PC-3 (cell line): ENCODE measurements at regions of chr18 and their contacts with region 1.

Region 1: GRCh38 chr18:22846088-22846683 is 86.9 kb upstream of the RBBP8 start:
- DNase-seq: peak; percentile 60
- ATAC-seq: peak; percentile 28; the same call in 1 of the 2 replicates
- H3K4me3 ChIP-seq: no peak overlapping the region
- H3K27ac ChIP-seq: no peak overlapping the region
- H3K4me1 ChIP-seq: peaks cover 25% of the 10 kb centered on the region
- H3K27me3 ChIP-seq: no peaks in the 10 kb centered on the region
- CTCF ChIP-seq: peak; percentile 76

Region 2: DNA sequence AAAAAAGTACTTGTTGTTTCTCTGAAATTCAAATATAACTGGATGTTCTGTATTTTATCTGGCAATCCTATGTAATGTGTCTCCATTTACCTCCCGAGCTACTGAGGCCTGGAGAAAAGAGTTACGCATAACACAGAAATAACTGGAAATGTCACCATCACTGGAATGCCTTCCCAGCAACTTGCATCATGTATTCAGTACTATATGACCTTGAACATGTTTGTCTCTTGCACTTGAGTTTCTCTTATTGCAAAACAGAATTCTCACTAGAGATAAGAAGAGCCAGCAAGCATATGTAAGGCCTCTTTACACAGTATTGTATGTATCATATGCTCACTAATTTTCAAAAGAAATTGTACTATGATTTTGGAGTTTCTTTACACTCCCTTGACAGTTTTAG is 328.8 kb before region 1 on chr18:
- CTCF ChIA-PET with region 1: no interaction called
- POLR2A ChIA-PET with region 1: no interaction called
- intact Hi-C with region 1: no loop called
- DNase-seq: no peak
- ATAC-seq: no peak
- H3K4me3 ChIP-seq: no peak overlapping the region
- H3K27ac ChIP-seq: no peak overlapping the region
- H3K4me1 ChIP-seq: no peaks in the 10 kb centered on the region
- H3K27me3 ChIP-seq: no peaks in the 10 kb centered on the region
- CTCF ChIP-seq: no peak

Region 3: GRCh38 chr18:22723773-22724172 is 122.4 kb before region 1 on chr18:
- CTCF ChIA-PET with region 1: no interaction called
- POLR2A ChIA-PET with region 1: no interaction called
- intact Hi-C with region 1: no loop called
- DNase-seq: no peak
- ATAC-seq: no peak
- H3K4me3 ChIP-seq: no peak overlapping the region
- H3K27ac ChIP-seq: no peak overlapping the region
- H3K4me1 ChIP-seq: no peaks in the 10 kb centered on the region
- H3K27me3 ChIP-seq: no peaks in the 10 kb centered on the region
- CTCF ChIP-seq: no peak

Region 4: GRCh38 chr18:22813648-22814328 is 32.4 kb before region 1 on chr18:
- CTCF ChIA-PET with region 1: interaction called, 4 read pairs
- POLR2A ChIA-PET with region 1: no interaction called
- intact Hi-C with region 1: loop called (anchors 5 kb)
- DNase-seq: peak; percentile 70
- ATAC-seq: peak; percentile 85
- H3K4me3 ChIP-seq: no peak overlapping the region; the same call in 1 of the 2 replicates
- H3K27ac ChIP-seq: no peak overlapping the region
- H3K4me1 ChIP-seq: peaks cover 15% of the 10 kb centered on the region
- H3K27me3 ChIP-seq: no peaks in the 10 kb centered on the region
- CTCF ChIP-seq: peak; percentile 93

Region 5: GRCh38 chr18:22983175-22983574 is 137.0 kb after region 1 on chr18:
- CTCF ChIA-PET with region 1: no interaction called
- POLR2A ChIA-PET with region 1: no interaction called
- intact Hi-C with region 1: loop called (anchors 1 kb)
- DNase-seq: peak; percentile 67
- ATAC-seq: no peak
- H3K4me3 ChIP-seq: no peak overlapping the region
- H3K27ac ChIP-seq: no peak overlapping the region
- H3K4me1 ChIP-seq: peaks cover 7% of the 10 kb centered on the region
- H3K27me3 ChIP-seq: no peaks in the 10 kb centered on the region
- CTCF ChIP-seq: peak; percentile 69

Region 6: GRCh38 chr18:23032030-23032582 is 185.9 kb after region 1 on chr18:
- CTCF ChIA-PET with region 1: no interaction called
- POLR2A ChIA-PET with region 1: no interaction called
- intact Hi-C with region 1: no loop called
- DNase-seq: peak; percentile 52
- ATAC-seq: no peak; the same call in 1 of the 2 replicates
- H3K4me3 ChIP-seq: no peak overlapping the region
- H3K27ac ChIP-seq: peak overlapping the region; percentile 23
- H3K4me1 ChIP-seq: peaks cover 17% of the 10 kb centered on the region
- H3K27me3 ChIP-seq: no peaks in the 10 kb centered on the region
- CTCF ChIP-seq: no peak